GM23248 (cell line): ENCODE measurements at regions of chr9 and their contacts with region 1.

Region 1: GRCh38 chr9:100714372-100715099 is 136.7 kb downstream of the CAVIN4 start:
- DNase-seq: peak; percentile 70
- H3K4me3 ChIP-seq: peak overlapping the region; percentile 23
- H3K27ac ChIP-seq: no peak overlapping the region
- H3K4me1 ChIP-seq: no peaks in the 10 kb centered on the region
- H3K27me3 ChIP-seq: no peaks in the 10 kb centered on the region

Region 2: DNA sequence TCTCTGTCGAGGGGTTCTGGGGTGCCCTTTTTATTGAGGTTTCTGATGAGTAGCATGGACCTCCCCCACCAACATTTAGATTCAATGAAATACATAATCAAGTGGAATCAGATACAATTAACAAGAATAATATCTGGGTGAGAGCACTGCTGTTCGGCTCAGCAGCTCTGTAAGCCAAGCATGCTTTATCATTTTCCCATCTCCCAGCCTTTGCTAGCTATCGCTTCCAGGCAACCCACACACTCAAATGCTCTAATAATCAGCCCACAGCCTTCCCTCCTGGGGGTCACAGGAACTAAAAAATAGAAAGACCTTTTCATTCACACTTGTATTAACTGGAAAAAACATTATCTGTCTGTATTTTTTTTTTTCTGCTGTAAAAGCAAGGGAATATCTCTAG is 322.9 kb after region 1 on chr9:
- in situ Hi-C with region 1: no loop called
- DNase-seq: no peak
- H3K4me3 ChIP-seq: no peak overlapping the region
- H3K27ac ChIP-seq: no peak overlapping the region
- H3K4me1 ChIP-seq: no peaks in the 10 kb centered on the region
- H3K27me3 ChIP-seq: no peaks in the 10 kb centered on the region

Region 3: GRCh38 chr9:101307051-101307450 is 592.5 kb after region 1 on chr9:
- in situ Hi-C with region 1: loop called (anchors 10 kb)
- DNase-seq: no peak
- H3K4me3 ChIP-seq: no peak overlapping the region
- H3K27ac ChIP-seq: no peak overlapping the region
- H3K4me1 ChIP-seq: no peaks in the 10 kb centered on the region
- H3K27me3 ChIP-seq: peaks cover 49% of the 10 kb centered on the region

Region 4: DNA sequence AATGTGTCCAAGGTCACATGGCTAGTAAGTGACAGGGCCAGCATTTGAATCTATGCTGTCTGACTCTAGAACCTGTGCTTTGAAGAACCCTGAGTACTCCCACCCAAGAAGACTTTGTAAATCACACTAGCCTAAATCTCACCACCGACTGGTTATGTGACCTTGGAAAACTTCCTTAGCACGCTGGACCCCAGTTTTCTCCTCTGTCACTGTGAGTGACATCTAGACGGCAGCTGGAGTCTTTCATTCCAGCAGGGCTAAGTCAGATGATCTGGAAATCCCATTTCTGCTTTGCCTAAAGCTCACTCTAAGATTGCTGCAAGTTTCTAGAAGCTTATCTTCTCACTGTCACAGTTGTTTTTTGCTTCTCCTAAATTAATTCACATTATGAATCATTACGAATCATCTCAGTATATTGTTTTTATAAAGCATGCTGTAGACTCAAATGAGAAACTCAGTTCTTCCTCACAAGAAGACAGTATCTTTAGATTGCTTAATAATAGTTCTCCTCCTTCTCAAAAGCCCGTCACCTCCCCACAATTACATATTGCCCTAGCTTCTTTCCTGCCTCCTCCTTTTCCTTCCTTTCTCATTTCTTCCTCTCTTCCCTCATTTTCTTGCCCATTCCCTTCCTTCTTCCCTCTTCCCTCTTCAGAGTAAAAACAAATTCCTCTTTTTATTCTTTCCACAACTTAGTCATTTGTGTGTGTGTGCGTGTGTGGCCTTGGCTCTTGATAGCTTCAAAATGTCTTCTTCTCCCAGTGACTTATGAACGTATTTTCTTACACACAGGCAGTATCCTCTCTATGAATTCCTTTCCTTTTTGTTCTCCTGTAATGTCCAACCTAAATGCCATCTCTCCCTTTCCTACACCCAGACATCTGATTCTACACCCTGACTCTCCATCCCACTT is 704.2 kb after region 1 on chr9:
- in situ Hi-C with region 1: no loop called
- DNase-seq: peak; percentile 62
- H3K4me3 ChIP-seq: no peak overlapping the region
- H3K27ac ChIP-seq: peak overlapping the region; percentile 2; the same call in 1 of the 2 replicates
- H3K4me1 ChIP-seq: peaks cover 5% of the 10 kb centered on the region; the same call in 1 of the 2 replicates
- H3K27me3 ChIP-seq: no peaks in the 10 kb centered on the region